H1 (cell line): ENCODE measurements at regions of chr1 and their contacts with region 1.

Region 1: GRCh38 chr1:110161877-110162276 is 11.6 kb downstream of the SLC6A17 start:
- DNase-seq: no peak
- H3K4me3 ChIP-seq: no peak overlapping the region
- H3K27ac ChIP-seq: no peak overlapping the region
- H3K4me1 ChIP-seq: no peaks in the 10 kb centered on the region; a peak in 1 of 7 replicates
- H3K27me3 ChIP-seq: no peaks in the 10 kb centered on the region; a peak in 1 of 7 replicates
- CTCF ChIP-seq: no peak
- EP300 ChIP-seq: no peak
- POLR2A ChIP-seq: no peak
- RAD21 ChIP-seq: no peak

Region 2: GRCh38 chr1:110097887-110098681 is 63.8 kb before region 1 on chr1:
- CTCF ChIA-PET with region 1: no interaction called
- POLR2A ChIA-PET with region 1: no interaction called
- DNase-seq: no peak
- H3K4me3 ChIP-seq: no peak overlapping the region
- H3K27ac ChIP-seq: no peak overlapping the region
- H3K4me1 ChIP-seq: no peaks in the 10 kb centered on the region
- H3K27me3 ChIP-seq: no peaks in the 10 kb centered on the region; a peak in 2 of 7 replicates
- CTCF ChIP-seq: no peak
- EP300 ChIP-seq: no peak
- POLR2A ChIP-seq: no peak
- RAD21 ChIP-seq: no peak

Region 3: GRCh38 chr1:110176299-110176956 is 14.6 kb after region 1 on chr1:
- CTCF ChIA-PET with region 1: interaction called, 14 read pairs
- POLR2A ChIA-PET with region 1: interaction called, 3 read pairs
- DNase-seq: no peak
- H3K4me3 ChIP-seq: no peak overlapping the region
- H3K27ac ChIP-seq: no peak overlapping the region
- H3K4me1 ChIP-seq: peaks cover 0 to 4% (median 0%) of the 10 kb centered on the region in 4 experiments; a peak in 2 of 7 replicates
- H3K27me3 ChIP-seq: no peaks in the 10 kb centered on the region; a peak in 1 of 7 replicates
- CTCF ChIP-seq: no peak
- EP300 ChIP-seq: no peak
- POLR2A ChIP-seq: no peak
- RAD21 ChIP-seq: no peak